ENCODE measurements at regions of chr19 and their contacts with region 1.

Region 1: DNA sequence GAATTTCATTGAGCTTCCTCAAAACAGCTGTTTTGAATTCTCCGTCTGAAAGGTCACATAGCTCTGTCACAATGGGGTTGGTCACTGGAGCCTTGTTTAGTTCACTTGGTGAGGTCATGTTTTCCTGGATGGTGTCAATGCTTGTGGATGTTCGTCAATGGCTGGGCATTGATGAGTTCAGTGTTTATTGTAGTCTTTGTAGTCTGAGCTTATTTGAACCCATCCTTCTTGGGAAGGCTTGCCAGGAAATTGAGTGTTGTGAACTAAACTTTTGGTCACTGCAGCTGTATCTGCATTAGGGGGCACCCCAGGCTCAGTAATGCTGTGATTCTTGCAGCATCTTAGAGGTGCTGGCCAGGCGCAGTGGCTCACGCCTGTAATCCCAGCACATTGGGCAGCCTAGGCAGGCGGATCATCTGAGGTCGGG is 22.0 kb downstream of the BLOC1S3 start:
- DNase-seq: peak; percentile 73
- H3K4me3 ChIP-seq: no peak overlapping the region
- H3K27ac ChIP-seq: no peak overlapping the region
- H3K4me1 ChIP-seq: peaks cover 4% of the 10 kb centered on the region
- H3K27me3 ChIP-seq: no peaks in the 10 kb centered on the region
- CTCF ChIP-seq: peak; percentile 52 to 60
- POLR2A ChIP-seq: no peak

Region 2: DNA sequence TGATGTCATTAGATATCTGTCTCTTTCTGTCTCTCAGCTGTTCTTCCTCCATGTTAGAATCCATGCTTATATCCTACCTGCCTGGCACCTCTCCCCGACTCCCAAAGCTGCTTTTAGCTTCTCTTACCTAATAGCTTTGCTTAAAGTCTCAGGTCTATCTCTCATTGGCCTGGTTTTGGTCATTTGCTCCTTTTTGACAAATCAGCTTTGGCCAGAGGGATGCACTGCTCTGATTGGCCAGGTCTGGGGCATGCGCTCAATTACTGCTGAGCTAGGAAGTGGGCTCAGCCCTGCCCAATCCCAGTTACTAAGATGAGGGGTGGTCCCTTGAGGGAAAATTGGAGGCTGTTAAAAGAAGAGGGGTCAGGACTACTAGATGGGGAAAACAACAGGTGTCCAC is 173.2 kb before region 1 on chr19:
- CTCF ChIA-PET with region 1: no interaction called
- POLR2A ChIA-PET with region 1: no interaction called
- dilution Hi-C with region 1: no loop called
- intact Hi-C with region 1: no loop called
- DNase-seq: no peak
- H3K4me3 ChIP-seq: no peak overlapping the region
- H3K27ac ChIP-seq: no peak overlapping the region
- H3K4me1 ChIP-seq: no peaks in the 10 kb centered on the region
- H3K27me3 ChIP-seq: no peaks in the 10 kb centered on the region
- CTCF ChIP-seq: no peak
- POLR2A ChIP-seq: no peak

Region 3: GRCh38 chr19:45091031-45091923 is 109.3 kb before region 1 on chr19:
- CTCF ChIA-PET with region 1: no interaction called
- POLR2A ChIA-PET with region 1: no interaction called
- dilution Hi-C with region 1: no loop called
- intact Hi-C with region 1: no loop called
- DNase-seq: peak; percentile 99
- H3K4me3 ChIP-seq: peak overlapping the region; percentile 29 to 77 (median 76)
- H3K27ac ChIP-seq: peak overlapping the region; percentile 52
- H3K4me1 ChIP-seq: peaks cover 13% of the 10 kb centered on the region
- H3K27me3 ChIP-seq: no peaks in the 10 kb centered on the region
- CTCF ChIP-seq: no peak
- POLR2A ChIP-seq: peak; percentile 93

Region 4: GRCh38 chr19:45245334-45245787 is 44.8 kb after region 1 on chr19 and contains the start of gene EXOC3L2:
- CTCF ChIA-PET with region 1: interaction called, 102 read pairs
- POLR2A ChIA-PET with region 1: no interaction called
- dilution Hi-C with region 1: no loop called
- intact Hi-C with region 1: loop called (anchors 1 kb)
- DNase-seq: no peak
- H3K4me3 ChIP-seq: no peak within 1 kb of the TSS
- H3K27ac ChIP-seq: no peak within 1 kb of the TSS
- H3K4me1 ChIP-seq: peaks cover 30% of the 10 kb centered on the region
- H3K27me3 ChIP-seq: no peaks in the 10 kb centered on the region
- CTCF ChIP-seq: no peak
- POLR2A ChIP-seq: no peak
- total RNA-seq, gene EXOC3L2: 0.66 and 1.2 TPM in 2 replicates